PC-9 (cell line): ENCODE measurements at regions of chr16 and their contacts with region 1.

Region 1: GRCh38 chr16:6643080-6643686 is 689.5 kb upstream of the RBFOX1 start:
- DNase-seq: peak in 1 of 2 experiments; percentile 42
- H3K4me3 ChIP-seq: no peak overlapping the region
- H3K27ac ChIP-seq: no peak overlapping the region
- H3K4me1 ChIP-seq: no peaks in the 10 kb centered on the region
- H3K27me3 ChIP-seq: peaks cover 56% of the 10 kb centered on the region
- CTCF ChIP-seq: peak; percentile 92

Region 2: DNA sequence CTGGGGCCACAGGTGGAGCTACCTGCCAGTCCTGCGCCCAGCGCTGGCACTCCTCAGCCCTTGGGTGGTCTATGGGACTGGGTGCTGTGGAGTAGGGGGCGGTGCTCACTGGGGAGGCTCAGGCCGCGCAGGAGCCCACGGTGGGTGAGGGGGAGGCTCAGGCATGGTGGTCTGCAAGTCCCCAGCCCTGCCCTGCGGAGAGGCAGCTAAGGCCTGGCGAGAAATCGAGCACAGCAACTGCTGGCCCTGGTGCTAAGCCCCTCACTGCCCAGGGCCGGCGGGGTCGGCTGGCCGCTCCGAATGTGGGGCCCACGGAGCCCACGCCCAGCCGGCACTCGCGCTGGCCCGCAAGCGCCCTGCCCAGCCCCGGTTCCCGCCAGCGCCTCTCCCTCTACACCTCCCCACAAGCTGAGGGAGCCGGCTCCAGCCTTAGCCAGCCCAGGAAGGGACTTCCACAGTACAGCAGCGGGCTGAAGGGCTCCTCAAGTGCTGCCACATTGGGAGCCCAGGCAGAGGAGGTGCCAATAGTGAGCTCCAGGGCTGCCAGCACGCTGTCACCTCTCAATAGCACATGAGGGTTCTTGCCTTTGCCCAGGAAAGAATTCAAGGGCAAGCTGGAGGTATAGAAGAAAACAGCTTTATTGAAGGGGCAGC is 1534.6 kb before region 1 on chr16:
- CTCF ChIA-PET with region 1: no interaction called
- POLR2A ChIA-PET with region 1: no interaction called
- intact Hi-C with region 1: loop called (anchors 10 kb)
- DNase-seq: no peak
- H3K4me3 ChIP-seq: no peak overlapping the region
- H3K27ac ChIP-seq: no peak overlapping the region
- H3K4me1 ChIP-seq: no peaks in the 10 kb centered on the region
- H3K27me3 ChIP-seq: peaks cover 46% of the 10 kb centered on the region
- CTCF ChIP-seq: no peak

Region 3: DNA sequence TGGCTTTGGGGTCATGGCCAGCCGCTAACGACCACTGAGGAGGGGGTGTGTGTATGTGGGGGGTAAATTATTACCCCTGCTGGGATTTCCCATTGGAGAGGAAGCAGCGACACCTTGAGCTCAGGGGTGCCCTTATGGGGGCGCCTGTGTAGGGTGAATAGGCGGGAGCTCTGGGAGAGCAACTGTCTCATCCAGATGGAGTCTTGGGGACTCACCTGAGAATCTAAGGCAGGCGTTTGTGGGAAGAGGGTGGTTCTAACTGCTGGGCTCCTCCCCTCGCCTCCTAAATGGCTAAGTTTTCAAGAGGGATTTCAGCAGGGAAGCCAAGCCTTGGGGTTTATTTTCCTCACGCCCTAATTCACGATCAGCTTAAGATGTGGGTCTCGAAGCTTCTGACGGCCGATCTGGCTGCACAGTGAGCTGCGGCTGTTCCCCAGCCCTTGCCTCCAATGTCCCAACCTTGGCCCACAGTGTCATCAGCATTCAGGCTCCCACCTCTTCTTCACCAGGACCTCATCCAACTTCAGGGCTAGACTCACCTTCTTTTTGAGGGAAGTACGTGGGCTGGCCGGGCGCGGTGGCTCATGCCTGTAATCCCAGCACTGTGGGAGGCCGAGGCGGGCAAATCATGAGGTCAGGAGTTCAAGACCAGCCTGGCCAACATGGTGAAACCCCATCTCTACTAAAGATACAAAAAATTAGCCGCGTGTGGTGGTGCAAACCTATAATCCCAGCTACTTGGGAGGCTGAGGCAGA is 1408.7 kb before region 1 on chr16:
- CTCF ChIA-PET with region 1: no interaction called
- POLR2A ChIA-PET with region 1: no interaction called
- intact Hi-C with region 1: loop called (anchors 5 kb)
- DNase-seq: no peak
- H3K4me3 ChIP-seq: no peak overlapping the region
- H3K27ac ChIP-seq: no peak overlapping the region
- H3K4me1 ChIP-seq: no peaks in the 10 kb centered on the region
- H3K27me3 ChIP-seq: peaks cover 62% of the 10 kb centered on the region
- CTCF ChIP-seq: no peak

Region 4: GRCh38 chr16:5502467-5502869 is 1140.7 kb before region 1 on chr16:
- CTCF ChIA-PET with region 1: no interaction called
- POLR2A ChIA-PET with region 1: no interaction called
- intact Hi-C with region 1: loop called (anchors 10 kb)
- DNase-seq: peak in 1 of 2 experiments; percentile 9
- H3K4me3 ChIP-seq: no peak overlapping the region
- H3K27ac ChIP-seq: no peak overlapping the region
- H3K4me1 ChIP-seq: no peaks in the 10 kb centered on the region
- H3K27me3 ChIP-seq: peaks cover 33% of the 10 kb centered on the region; the same call in 1 of the 2 replicates
- CTCF ChIP-seq: peak; percentile 51

Region 5: DNA sequence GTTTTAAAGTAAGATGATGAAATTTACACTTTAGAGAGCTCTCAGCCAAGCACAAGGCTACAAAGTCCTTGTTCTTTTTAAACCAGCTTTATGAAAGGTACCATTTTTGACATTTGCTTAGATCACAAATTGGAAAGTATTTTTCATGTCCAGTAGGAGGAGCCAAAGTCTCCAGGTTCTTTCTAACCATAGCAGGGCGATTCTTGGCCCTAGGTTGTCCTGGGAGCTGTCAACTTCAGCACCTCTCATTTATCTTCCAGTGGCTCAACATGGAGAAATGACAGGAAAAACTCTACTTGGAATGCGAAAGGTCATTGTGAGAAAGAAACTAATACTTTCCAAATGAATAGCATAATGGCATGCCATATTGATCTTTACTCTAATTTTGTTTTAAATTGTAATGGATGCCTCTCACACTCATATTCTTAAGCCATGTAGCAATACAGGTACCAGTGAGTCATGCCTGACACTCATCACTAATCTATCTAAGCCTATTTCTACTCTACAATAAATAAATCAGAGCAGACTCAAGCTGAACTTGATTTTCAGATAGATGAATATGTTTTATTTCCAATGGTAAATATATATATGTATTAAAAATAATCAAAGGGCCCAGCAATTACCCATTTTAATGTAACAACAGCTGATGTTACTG is 626.5 kb before region 1 on chr16:
- CTCF ChIA-PET with region 1: interaction called, 6 read pairs
- POLR2A ChIA-PET with region 1: no interaction called
- intact Hi-C with region 1: loop called (anchors 1 kb)
- DNase-seq: no peak
- H3K4me3 ChIP-seq: no peak overlapping the region
- H3K27ac ChIP-seq: no peak overlapping the region
- H3K4me1 ChIP-seq: no peaks in the 10 kb centered on the region
- H3K27me3 ChIP-seq: peaks cover 14% of the 10 kb centered on the region; the same call in 1 of the 2 replicates
- CTCF ChIP-seq: peak; percentile 54